ENCODE measurements at regions of chr1 and their contacts with region 1.

Region 1: DNA sequence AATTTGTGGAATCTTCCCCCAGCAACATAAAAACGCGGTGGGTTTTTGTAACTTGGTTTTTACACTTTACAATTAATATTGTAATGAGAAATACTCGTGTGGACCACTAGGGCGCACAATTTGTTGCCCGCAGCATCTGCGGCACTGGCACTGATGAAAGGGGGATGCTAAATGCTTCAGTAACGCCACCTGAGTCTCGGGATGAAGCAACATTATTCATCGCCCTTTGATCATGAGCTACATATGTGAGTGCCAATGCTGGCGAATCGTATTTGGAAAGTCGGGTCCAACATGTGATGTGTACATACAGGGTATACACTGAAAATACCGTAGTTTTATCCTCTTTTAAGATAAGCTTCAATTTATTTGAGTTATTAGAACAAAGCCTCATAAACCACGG is 34.2 kb upstream of the COX20 start:
- DNase-seq: no peak
- H3K4me3 ChIP-seq: no peak overlapping the region
- H3K27ac ChIP-seq: no peak overlapping the region
- H3K4me1 ChIP-seq: peaks cover 0 to 5% (median 0%) of the 10 kb centered on the region in 4 experiments; a peak in 1 of 7 replicates
- H3K27me3 ChIP-seq: no peaks in the 10 kb centered on the region
- CTCF ChIP-seq: peak; percentile 48 to 67 (median 61)
- EP300 ChIP-seq: no peak
- POLR2A ChIP-seq: no peak
- RAD21 ChIP-seq: peak; percentile 66 to 76

Region 2: GRCh38 chr1:244502630-244503029 is 298.6 kb before region 1 on chr1:
- CTCF ChIA-PET with region 1: no interaction called
- POLR2A ChIA-PET with region 1: no interaction called
- DNase-seq: no peak
- H3K4me3 ChIP-seq: no peak overlapping the region
- H3K27ac ChIP-seq: no peak overlapping the region
- H3K4me1 ChIP-seq: no peaks in the 10 kb centered on the region; a peak in 1 of 7 replicates
- H3K27me3 ChIP-seq: no peaks in the 10 kb centered on the region
- CTCF ChIP-seq: no peak
- EP300 ChIP-seq: no peak
- POLR2A ChIP-seq: no peak
- RAD21 ChIP-seq: no peak

Region 3: GRCh38 chr1:244712669-244713068 is 88.6 kb before region 1 on chr1:
- CTCF ChIA-PET with region 1: interaction called, 14 read pairs
- POLR2A ChIA-PET with region 1: no interaction called
- DNase-seq: no peak
- H3K4me3 ChIP-seq: no peak overlapping the region
- H3K27ac ChIP-seq: no peak overlapping the region
- H3K4me1 ChIP-seq: no peaks in the 10 kb centered on the region; a peak in 1 of 7 replicates
- H3K27me3 ChIP-seq: no peaks in the 10 kb centered on the region
- CTCF ChIP-seq: no peak
- EP300 ChIP-seq: no peak
- POLR2A ChIP-seq: no peak
- RAD21 ChIP-seq: no peak

Region 4: GRCh38 chr1:244757091-244757939 is 43.9 kb before region 1 on chr1:
- CTCF ChIA-PET with region 1: interaction called, 13 read pairs
- POLR2A ChIA-PET with region 1: no interaction called
- DNase-seq: no peak
- H3K4me3 ChIP-seq: no peak overlapping the region
- H3K27ac ChIP-seq: no peak overlapping the region
- H3K4me1 ChIP-seq: peaks cover 4 to 10% (median 6%) of the 10 kb centered on the region in 4 experiments; a peak in 6 of 7 replicates
- H3K27me3 ChIP-seq: no peaks in the 10 kb centered on the region
- CTCF ChIP-seq: no peak
- EP300 ChIP-seq: no peak
- POLR2A ChIP-seq: no peak
- RAD21 ChIP-seq: no peak

Region 5: GRCh38 chr1:244788493-244789275 is 12.6 kb before region 1 on chr1:
- CTCF ChIA-PET with region 1: interaction called, 17 read pairs
- POLR2A ChIA-PET with region 1: interaction called, 4 read pairs
- DNase-seq: no peak
- H3K4me3 ChIP-seq: no peak overlapping the region
- H3K27ac ChIP-seq: no peak overlapping the region
- H3K4me1 ChIP-seq: peaks cover 0 to 8% (median 3%) of the 10 kb centered on the region in 4 experiments; a peak in 4 of 7 replicates
- H3K27me3 ChIP-seq: no peaks in the 10 kb centered on the region
- CTCF ChIP-seq: no peak
- EP300 ChIP-seq: no peak
- POLR2A ChIP-seq: no peak
- RAD21 ChIP-seq: no peak

Region 6: GRCh38 chr1:244826712-244827111 is 25.5 kb after region 1 on chr1:
- CTCF ChIA-PET with region 1: interaction called, 22 read pairs
- POLR2A ChIA-PET with region 1: interaction called, 4 read pairs
- DNase-seq: no peak
- H3K4me3 ChIP-seq: no peak overlapping the region
- H3K27ac ChIP-seq: no peak overlapping the region
- H3K4me1 ChIP-seq: peaks cover 0 to 5% (median 2%) of the 10 kb centered on the region in 4 experiments; a peak in 1 of 7 replicates
- H3K27me3 ChIP-seq: no peaks in the 10 kb centered on the region
- CTCF ChIP-seq: no peak
- EP300 ChIP-seq: no peak
- POLR2A ChIP-seq: no peak
- RAD21 ChIP-seq: no peak

Region 7: DNA sequence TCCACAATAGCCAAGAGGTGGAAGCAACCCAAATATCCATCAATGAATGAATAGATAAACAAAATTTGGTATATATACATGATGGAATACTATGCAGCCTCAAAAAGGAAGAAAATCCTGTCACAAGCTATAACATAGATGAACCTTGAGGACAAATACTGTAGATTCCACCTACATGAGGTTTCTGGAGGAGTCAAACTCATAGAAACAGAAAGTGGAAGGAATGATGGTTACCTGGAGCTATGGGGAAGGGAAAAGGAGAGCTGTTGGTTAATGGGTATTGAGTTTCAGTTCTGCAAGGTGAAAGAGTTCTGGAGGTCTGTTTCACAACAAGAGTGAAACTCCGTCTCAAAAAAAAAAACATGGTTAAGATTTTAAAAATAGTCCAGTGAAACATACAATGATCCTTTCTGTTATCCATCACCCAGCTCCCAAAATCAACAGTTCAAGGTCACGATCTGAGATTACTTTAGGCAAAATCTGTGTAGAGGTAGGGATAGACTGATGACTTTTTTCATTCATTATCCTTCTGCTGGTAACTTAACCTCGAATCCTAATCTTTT is 143.9 kb after region 1 on chr1:
- CTCF ChIA-PET with region 1: no interaction called
- POLR2A ChIA-PET with region 1: no interaction called
- DNase-seq: no peak
- H3K4me3 ChIP-seq: no peak overlapping the region
- H3K27ac ChIP-seq: no peak overlapping the region
- H3K4me1 ChIP-seq: no peaks in the 10 kb centered on the region
- H3K27me3 ChIP-seq: no peaks in the 10 kb centered on the region
- CTCF ChIP-seq: no peak
- EP300 ChIP-seq: no peak
- POLR2A ChIP-seq: no peak
- RAD21 ChIP-seq: no peak

Region 8: DNA sequence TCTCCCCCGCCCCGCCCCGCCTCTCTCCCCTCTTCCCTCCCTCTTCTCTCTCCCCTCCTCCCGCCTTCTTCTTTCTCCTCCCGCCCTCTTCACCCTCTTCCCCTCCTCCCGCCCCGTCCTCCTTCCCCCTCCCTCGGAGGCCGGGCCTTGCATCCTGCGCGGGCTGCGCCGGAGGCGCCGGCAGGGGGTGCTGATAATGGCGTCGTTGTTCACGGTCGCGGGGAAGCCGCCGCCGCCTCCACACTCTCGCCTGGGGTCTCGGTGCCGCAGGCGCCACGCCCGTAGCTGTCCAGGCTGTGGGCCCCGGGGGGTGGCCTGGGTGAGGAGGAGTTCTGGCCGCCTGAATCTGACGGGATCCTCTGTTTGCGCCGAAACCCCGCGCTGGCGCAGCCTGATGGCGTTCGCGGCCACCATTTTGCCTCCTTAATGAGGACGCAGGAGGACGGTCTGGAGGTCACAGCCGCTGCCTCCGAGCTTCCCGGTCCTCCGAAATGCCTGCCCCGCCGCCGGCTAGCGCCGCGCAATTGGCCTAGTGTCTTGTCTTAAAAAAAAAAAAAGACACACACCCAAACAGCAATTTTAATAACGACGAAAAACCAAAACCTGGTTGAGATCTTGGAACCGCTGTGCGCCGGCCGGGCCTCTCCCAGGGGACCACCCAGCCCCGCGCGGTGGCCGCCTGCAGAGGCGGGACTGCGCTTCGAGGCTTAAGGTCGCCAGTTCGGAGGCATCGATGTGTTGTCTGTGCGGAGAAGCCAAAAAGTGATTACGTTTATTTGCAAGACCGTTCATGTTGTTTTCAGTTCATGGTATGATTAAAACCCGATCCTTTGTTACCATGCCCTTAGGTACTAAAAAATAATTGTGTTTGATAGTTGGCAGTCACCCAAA is 169.7 kb after region 1 on chr1:
- CTCF ChIA-PET with region 1: no interaction called
- POLR2A ChIA-PET with region 1: no interaction called
- DNase-seq: peak; percentile 84 to 96
- H3K4me3 ChIP-seq: peak overlapping the region; percentile 65 to 88 (median 76)
- H3K27ac ChIP-seq: peak overlapping the region; percentile 99
- H3K4me1 ChIP-seq: peaks cover 3 to 9% (median 7%) of the 10 kb centered on the region in 4 experiments; a peak in 6 of 7 replicates
- H3K27me3 ChIP-seq: no peaks in the 10 kb centered on the region
- CTCF ChIP-seq: peak; percentile 24 to 43 (median 24); a peak in 3 of 4 replicates
- EP300 ChIP-seq: peak in 1 of 2 experiments; percentile 40; a peak in 2 of 3 replicates
- POLR2A ChIP-seq: peak; percentile 90 to 93
- RAD21 ChIP-seq: peak in 1 of 2 experiments; percentile 17; a peak in 2 of 4 replicates

Region 9: GRCh38 chr1:245008761-245009160 is 207.5 kb after region 1 on chr1:
- CTCF ChIA-PET with region 1: no interaction called
- POLR2A ChIA-PET with region 1: no interaction called
- DNase-seq: no peak
- H3K4me3 ChIP-seq: no peak overlapping the region
- H3K27ac ChIP-seq: no peak overlapping the region
- H3K4me1 ChIP-seq: no peaks in the 10 kb centered on the region
- H3K27me3 ChIP-seq: no peaks in the 10 kb centered on the region
- CTCF ChIP-seq: no peak
- EP300 ChIP-seq: no peak
- POLR2A ChIP-seq: no peak
- RAD21 ChIP-seq: no peak

Measured in H1 (cell line).